ENCODE measurements at regions of chr18 and their contacts with region 1.

Region 1: DNA sequence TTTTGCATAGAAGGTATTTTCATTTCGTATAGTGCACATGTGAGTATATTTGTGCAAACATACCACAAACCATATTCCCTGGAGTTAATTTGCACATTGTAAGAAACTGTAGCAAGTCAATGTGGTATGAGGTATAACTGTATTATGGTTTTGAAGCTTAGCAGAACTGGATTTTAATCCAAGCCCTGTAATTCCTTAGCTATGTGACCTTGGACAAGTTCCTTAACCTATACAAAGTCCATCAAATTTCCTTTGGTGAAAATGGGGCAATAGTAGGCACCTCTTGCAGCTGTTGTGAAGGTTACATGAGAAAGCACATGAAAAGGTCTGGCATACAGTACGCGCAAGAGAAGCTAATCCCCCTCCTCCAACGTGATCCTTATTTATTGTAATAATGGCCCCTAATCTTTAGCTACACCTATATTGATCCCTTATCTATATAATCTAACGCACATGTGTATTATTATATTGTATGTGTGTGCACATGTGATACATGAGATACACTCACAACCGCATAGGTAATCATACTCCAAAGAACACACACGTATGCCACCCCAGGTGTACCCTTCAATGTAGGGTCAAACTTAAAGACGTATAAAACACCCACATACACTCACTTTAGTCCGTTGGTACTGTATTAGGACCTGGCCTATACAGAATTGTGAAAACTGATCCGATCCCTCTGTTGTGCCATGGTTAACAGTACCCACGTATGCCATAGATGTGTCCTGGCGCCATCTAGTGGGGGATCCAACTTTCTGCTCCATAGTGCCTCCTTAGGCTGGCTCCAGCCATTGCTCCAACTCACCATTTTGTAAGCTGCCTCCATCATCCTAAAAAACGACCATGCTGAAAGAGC is 402.9 kb upstream of the SLC14A2 start:
- DNase-seq: peak; percentile 58
- ATAC-seq: peak; percentile 100
- H3K4me3 ChIP-seq: no peak overlapping the region
- H3K27ac ChIP-seq: no peak overlapping the region
- H3K4me1 ChIP-seq: no peaks in the 10 kb centered on the region
- H3K27me3 ChIP-seq: no peaks in the 10 kb centered on the region
- CTCF ChIP-seq: peak; percentile 99 to 100 (median 99); a peak in 5 of 6 replicates
- EP300 ChIP-seq: no peak
- POLR2A ChIP-seq: no peak
- RAD21 ChIP-seq: peak; percentile 96

Region 2: DNA sequence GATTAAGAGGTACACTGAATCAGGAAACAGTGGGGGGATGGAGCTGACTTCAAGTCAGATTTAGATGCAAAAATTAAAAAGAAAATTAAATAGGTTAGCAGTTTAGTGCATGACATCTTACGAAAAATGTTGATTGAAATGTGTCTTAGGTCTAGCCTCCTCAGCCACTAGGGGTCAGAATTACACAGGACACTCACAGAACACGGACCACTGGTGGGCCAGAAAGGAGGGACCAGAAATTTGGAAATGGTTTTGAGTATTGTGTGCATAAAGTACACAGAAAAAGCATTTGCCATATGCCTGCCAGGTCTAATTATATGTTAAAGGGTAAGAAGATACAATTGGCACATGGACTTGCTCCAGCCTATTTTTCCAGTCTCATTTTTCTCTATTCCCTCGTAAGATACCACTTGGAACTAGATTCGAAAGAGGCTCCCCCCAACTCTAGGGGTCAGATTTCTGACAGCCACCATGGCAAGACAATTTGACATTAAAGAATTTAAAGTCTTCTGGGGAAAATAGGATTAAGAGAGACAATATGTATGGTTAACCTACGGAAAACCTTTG is 1082.0 kb before region 1 on chr18:
- CTCF ChIA-PET with region 1: interaction called, 6 read pairs
- POLR2A ChIA-PET with region 1: no interaction called
- RAD21 ChIA-PET with region 1: no interaction called
- SMC1A ChIA-PET with region 1: no interaction called
- in situ Hi-C with region 1: no loop called
- intact Hi-C with region 1: loop called (anchors 5 kb)
- DNase-seq: no peak
- ATAC-seq: peak; percentile 82
- H3K4me3 ChIP-seq: no peak overlapping the region
- H3K27ac ChIP-seq: no peak overlapping the region
- H3K4me1 ChIP-seq: no peaks in the 10 kb centered on the region
- H3K27me3 ChIP-seq: no peaks in the 10 kb centered on the region
- CTCF ChIP-seq: peak; percentile 53 to 69 (median 57)
- EP300 ChIP-seq: no peak
- POLR2A ChIP-seq: no peak
- RAD21 ChIP-seq: peak; percentile 76

Region 3: GRCh38 chr18:44887227-44887631 is 325.2 kb before region 1 on chr18:
- CTCF ChIA-PET with region 1: interaction called, 8 read pairs
- POLR2A ChIA-PET with region 1: no interaction called
- RAD21 ChIA-PET with region 1: interaction called, 3 read pairs
- SMC1A ChIA-PET with region 1: interaction called, 12 read pairs
- in situ Hi-C with region 1: no loop called
- intact Hi-C with region 1: no loop called
- DNase-seq: peak; percentile 69
- ATAC-seq: peak; percentile 95
- H3K4me3 ChIP-seq: no peak overlapping the region
- H3K27ac ChIP-seq: peak overlapping the region; percentile 36
- H3K4me1 ChIP-seq: peaks cover 14% of the 10 kb centered on the region
- H3K27me3 ChIP-seq: no peaks in the 10 kb centered on the region
- CTCF ChIP-seq: no peak
- EP300 ChIP-seq: 0 out of 4 replicates have a peak, but pooled peaks of 1 of the 2 experiments have one; percentile 44
- POLR2A ChIP-seq: no peak
- RAD21 ChIP-seq: no peak

Region 4: DNA sequence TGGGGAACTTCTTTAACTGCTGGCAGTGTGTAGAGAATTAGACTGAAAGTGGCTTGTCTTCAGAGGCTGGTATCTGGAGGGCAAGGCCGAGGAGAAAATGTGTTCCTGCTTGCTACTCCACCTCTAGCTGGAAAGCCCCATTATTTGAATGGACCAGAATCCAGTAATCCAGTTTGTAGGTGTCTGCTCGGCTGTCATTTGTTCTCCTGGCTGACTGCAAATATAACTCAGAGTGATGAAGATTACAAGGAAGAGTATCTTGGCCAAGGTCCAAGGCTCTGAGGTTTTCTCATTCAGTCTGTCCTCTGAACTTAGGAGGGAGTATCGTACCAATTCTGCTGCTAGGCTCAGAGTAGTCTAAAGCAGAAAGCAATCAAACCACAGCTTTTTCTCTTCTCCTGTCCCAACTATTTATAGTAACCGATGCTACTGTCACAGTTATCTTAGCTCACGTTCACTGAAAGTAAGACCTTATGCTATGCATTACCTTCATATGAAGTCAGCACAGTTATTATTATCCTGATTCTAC is 303.2 kb before region 1 on chr18:
- CTCF ChIA-PET with region 1: interaction called, 49 read pairs
- POLR2A ChIA-PET with region 1: no interaction called
- RAD21 ChIA-PET with region 1: interaction called, 31 read pairs
- SMC1A ChIA-PET with region 1: interaction called, 16 read pairs
- in situ Hi-C with region 1: no loop called
- intact Hi-C with region 1: no loop called
- DNase-seq: peak; percentile 68
- ATAC-seq: peak; percentile 85
- H3K4me3 ChIP-seq: peak overlapping the region; percentile 29; the same call in 1 of the 2 replicates
- H3K27ac ChIP-seq: 0 out of 2 replicates have a peak overlapping the region, but pooled peaks have one; percentile 13
- H3K4me1 ChIP-seq: peaks cover 45% of the 10 kb centered on the region
- H3K27me3 ChIP-seq: no peaks in the 10 kb centered on the region
- CTCF ChIP-seq: no peak
- EP300 ChIP-seq: peak in 1 of 2 experiments; percentile 53; a peak in 2 of 4 replicates
- POLR2A ChIP-seq: no peak
- RAD21 ChIP-seq: 0 out of 2 replicates have a peak, but pooled peaks have one; percentile 11

Region 5: GRCh38 chr18:45081566-45082181 is 130.7 kb before region 1 on chr18:
- CTCF ChIA-PET with region 1: interaction called, 19 read pairs
- POLR2A ChIA-PET with region 1: no interaction called
- RAD21 ChIA-PET with region 1: interaction called, 13 read pairs
- SMC1A ChIA-PET with region 1: interaction called, 21 read pairs
- in situ Hi-C with region 1: no loop called
- intact Hi-C with region 1: no loop called
- DNase-seq: no peak
- ATAC-seq: no peak
- H3K4me3 ChIP-seq: no peak overlapping the region
- H3K27ac ChIP-seq: no peak overlapping the region
- H3K4me1 ChIP-seq: no peaks in the 10 kb centered on the region
- H3K27me3 ChIP-seq: no peaks in the 10 kb centered on the region
- CTCF ChIP-seq: no peak
- EP300 ChIP-seq: no peak
- POLR2A ChIP-seq: no peak
- RAD21 ChIP-seq: no peak

Region 6: GRCh38 chr18:45197526-45197970 is 14.9 kb before region 1 on chr18:
- CTCF ChIA-PET with region 1: interaction called, 19 read pairs
- POLR2A ChIA-PET with region 1: interaction called, 3 read pairs
- RAD21 ChIA-PET with region 1: interaction called, 16 read pairs
- SMC1A ChIA-PET with region 1: interaction called, 15 read pairs
- in situ Hi-C with region 1: no loop called
- intact Hi-C with region 1: no loop called
- DNase-seq: peak; percentile 88
- ATAC-seq: peak; percentile 98
- H3K4me3 ChIP-seq: no peak overlapping the region
- H3K27ac ChIP-seq: peak overlapping the region; percentile 42; the same call in 1 of the 2 replicates
- H3K4me1 ChIP-seq: peaks cover 7% of the 10 kb centered on the region; the same call in 1 of the 2 replicates
- H3K27me3 ChIP-seq: no peaks in the 10 kb centered on the region
- CTCF ChIP-seq: no peak
- EP300 ChIP-seq: peak; percentile 99 to 100
- POLR2A ChIP-seq: no peak
- RAD21 ChIP-seq: no peak

Region 7: GRCh38 chr18:45359338-45360001 is 147.1 kb after region 1 on chr18:
- CTCF ChIA-PET with region 1: no interaction called
- POLR2A ChIA-PET with region 1: no interaction called
- RAD21 ChIA-PET with region 1: no interaction called
- SMC1A ChIA-PET with region 1: no interaction called
- in situ Hi-C with region 1: no loop called
- intact Hi-C with region 1: no loop called
- DNase-seq: no peak
- ATAC-seq: no peak
- H3K4me3 ChIP-seq: no peak overlapping the region
- H3K27ac ChIP-seq: no peak overlapping the region
- H3K4me1 ChIP-seq: no peaks in the 10 kb centered on the region
- H3K27me3 ChIP-seq: no peaks in the 10 kb centered on the region; a peak in 2 of 4 replicates
- CTCF ChIP-seq: no peak
- EP300 ChIP-seq: no peak
- POLR2A ChIP-seq: no peak
- RAD21 ChIP-seq: no peak

Measured in GM12878 (cell line).